Vagina (tissue), 2 donors: ENCODE measurements at regions of chr10 and their contacts with region 1.

Region 1: GRCh38 chr10:104824380-104825006 is 183.4 kb downstream of the SORCS3 start:
- DNase-seq: no peak
- H3K4me3 ChIP-seq: no peak overlapping the region
- H3K27ac ChIP-seq: no peak overlapping the region
- H3K4me1 ChIP-seq: no peaks in the 10 kb centered on the region
- H3K27me3 ChIP-seq: no peaks in the 10 kb centered on the region
- CTCF ChIP-seq: no peak
- POLR2A ChIP-seq: no peak

Region 2: DNA sequence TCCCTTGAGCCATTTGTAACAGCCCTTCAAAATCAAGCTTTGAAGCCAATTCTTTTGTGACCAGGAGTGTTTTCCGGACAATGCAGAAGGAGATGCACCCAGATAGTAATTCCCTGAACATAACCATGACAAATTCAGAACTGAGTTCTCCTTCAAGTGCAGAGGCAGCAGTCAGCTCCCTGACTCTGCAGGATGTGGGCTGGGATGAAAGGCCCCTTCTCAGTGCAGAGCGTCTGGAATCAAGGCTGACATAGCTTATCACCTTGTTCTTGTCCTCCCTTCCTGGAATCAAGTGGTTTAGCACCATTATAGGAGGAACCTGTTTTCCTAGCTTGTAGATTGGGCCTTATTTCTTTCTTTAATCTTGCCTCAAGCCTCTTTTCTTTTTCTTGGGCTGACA is 40.0 kb before region 1 on chr10:
- intact Hi-C with region 1: loop called (anchors 1 kb)
- DNase-seq: no peak
- H3K4me3 ChIP-seq: no peak overlapping the region
- H3K27ac ChIP-seq: no peak overlapping the region
- H3K4me1 ChIP-seq: no peaks in the 10 kb centered on the region
- H3K27me3 ChIP-seq: no peaks in the 10 kb centered on the region
- CTCF ChIP-seq: no peak
- POLR2A ChIP-seq: no peak